ENCODE measurements at regions of chr2 and their contacts with region 1.

Region 1: GRCh38 chr2:174465327-174465726 is 21.5 kb downstream of the GPR155 start:
- DNase-seq: peak; percentile 12

Region 2: DNA sequence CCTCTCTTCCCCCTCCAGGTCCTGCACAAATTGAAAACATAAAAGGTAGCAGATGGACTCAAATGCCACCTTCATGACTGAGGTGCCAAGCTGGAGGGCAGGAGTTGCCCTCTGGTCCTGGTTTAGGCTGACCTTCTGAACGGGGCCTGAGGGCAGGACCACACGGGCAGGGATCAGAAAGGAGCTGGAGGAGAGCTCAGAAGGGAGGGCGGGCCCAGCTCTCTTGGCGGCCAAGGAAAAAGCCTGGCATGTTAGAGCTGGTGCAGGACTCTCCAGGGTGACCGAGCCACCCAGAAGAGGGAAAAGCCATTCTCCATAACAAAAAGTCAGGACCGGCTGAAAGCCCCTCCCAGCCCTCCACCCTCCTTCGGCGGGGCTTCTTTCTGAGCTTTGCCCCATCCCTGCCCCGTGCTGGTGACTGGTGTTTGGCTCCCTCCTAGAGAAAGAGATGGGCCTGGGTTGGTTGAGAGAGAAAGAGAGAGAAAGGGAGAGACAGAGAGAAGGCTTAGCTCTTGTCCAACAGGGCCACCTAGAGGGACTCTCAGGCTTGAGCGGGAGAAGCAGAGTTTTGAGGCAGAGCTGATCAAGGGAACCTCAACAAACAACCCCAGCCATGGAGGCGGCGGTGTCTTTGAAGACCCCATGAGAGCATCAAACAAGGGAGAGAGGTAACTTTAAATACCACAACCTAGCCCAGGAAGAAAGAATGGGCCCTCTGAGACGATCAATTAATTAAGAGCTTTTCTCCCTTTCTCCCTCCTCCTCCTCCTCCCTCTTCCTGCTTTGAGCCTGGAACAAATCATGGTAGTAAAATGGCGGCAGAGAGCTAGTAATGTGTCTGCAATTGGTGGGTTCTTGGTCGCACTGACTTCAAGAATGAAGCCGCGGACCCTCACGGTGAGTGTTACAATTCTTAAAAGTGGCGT is 81.5 kb after region 1 on chr2:
- CTCF ChIA-PET with region 1: interaction called, 20 read pairs
- POLR2A ChIA-PET with region 1: no interaction called
- DNase-seq: peak; percentile 47